ENCODE measurements at regions of chr16 and their contacts with region 1.

Region 1: GRCh38 chr16:81314603-81315270 is at the start of gene GAN:
- DNase-seq: peak; percentile 97
- H3K4me3 ChIP-seq: peak within 1 kb of the TSS; percentile 88
- H3K27ac ChIP-seq: peak within 1 kb of the TSS; percentile 89
- H3K4me1 ChIP-seq: peaks cover 8% of the 10 kb centered on the region
- H3K27me3 ChIP-seq: no peaks in the 10 kb centered on the region
- CTCF ChIP-seq: no peak
- total RNA-seq, gene GAN: 13.6 to 21.5 TPM

Region 2: DNA sequence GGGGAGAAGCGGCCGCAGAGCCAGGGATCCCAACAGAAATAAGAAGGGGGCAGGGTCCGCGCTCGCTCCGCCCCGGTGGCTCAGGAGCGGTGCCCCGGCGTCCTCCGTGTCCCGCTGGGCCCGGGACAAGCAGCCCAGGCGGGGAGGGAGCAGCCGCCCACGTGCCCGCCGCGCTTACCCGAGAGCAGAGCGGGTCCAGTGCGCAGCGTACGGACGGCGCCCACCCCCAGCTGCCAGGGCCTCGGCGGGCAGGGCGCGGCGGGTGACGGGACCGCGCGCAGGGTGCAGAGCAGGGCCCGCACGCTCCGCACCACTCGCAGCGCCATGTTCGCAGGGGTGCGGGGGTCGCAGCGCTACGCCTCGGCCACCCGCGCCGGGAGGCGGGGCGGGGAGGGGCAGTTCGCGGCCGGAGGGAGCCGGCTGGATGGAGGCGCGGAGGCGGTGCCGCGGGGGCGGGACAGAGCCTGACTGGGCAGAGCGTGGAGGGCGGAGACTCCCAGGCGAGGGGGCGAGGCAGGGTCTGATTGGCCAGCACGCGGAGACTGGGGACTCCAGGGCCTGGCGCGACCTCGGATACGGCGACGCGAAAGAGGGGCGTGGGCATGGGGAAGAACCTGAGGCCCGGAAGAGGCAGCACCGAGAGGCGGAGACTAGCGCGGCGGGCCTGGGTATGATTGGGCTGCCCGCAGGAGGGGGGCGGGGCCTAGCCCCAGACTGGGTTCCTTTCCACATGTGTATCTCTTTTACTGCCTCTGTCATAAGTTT is 218.6 kb before region 1 on chr16 and contains the start of gene GCSH:
- intact Hi-C with region 1: loop called (anchors 5 kb)
- DNase-seq: peak; percentile 99
- H3K4me3 ChIP-seq: peak within 1 kb of the TSS; percentile 94
- H3K27ac ChIP-seq: peak within 1 kb of the TSS; percentile 69
- H3K4me1 ChIP-seq: no peaks in the 10 kb centered on the region
- H3K27me3 ChIP-seq: no peaks in the 10 kb centered on the region
- CTCF ChIP-seq: no peak
- total RNA-seq, gene GCSH: 9.4 to 24.7 TPM

Region 3: DNA sequence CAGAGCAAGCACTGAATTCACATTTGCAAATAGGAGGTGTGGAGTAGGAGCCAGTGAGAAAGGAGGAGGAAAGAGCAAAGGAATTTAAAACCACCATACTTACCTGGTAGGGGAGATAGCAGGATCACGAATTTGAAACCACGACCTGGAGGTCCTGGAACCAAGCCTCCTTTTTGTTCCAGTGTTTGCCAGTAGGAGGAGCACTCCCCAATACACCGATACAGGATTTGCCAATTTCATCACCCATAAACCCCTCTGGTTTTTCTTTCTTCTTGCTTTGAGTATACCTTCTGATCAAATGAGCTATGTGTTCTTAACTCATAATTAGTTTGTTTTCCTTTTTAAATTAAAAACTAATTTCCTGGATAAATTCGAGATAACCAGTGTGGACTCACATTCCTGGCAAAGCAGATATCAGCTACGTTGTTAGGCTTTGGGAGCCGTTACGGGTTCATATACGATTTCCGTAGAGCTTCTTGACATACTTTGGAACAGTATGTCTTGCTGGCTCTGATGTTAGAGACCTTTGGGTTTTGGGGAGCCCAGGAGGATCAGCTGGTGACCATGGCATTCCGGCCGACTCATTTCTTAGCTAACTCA is 53.6 kb before region 1 on chr16:
- intact Hi-C with region 1: loop called (anchors 10 kb)
- DNase-seq: no peak
- H3K4me3 ChIP-seq: no peak overlapping the region
- H3K27ac ChIP-seq: no peak overlapping the region
- H3K4me1 ChIP-seq: no peaks in the 10 kb centered on the region
- H3K27me3 ChIP-seq: no peaks in the 10 kb centered on the region
- CTCF ChIP-seq: peak; percentile 56

Region 4: GRCh38 chr16:81349996-81350618 is 35.4 kb after region 1 on chr16:
- intact Hi-C with region 1: no loop called
- DNase-seq: no peak
- H3K4me3 ChIP-seq: no peak overlapping the region
- H3K27ac ChIP-seq: no peak overlapping the region
- H3K4me1 ChIP-seq: no peaks in the 10 kb centered on the region
- H3K27me3 ChIP-seq: no peaks in the 10 kb centered on the region
- CTCF ChIP-seq: no peak

Region 5: GRCh38 chr16:81366316-81366932 is 51.7 kb after region 1 on chr16:
- intact Hi-C with region 1: no loop called
- DNase-seq: no peak
- H3K4me3 ChIP-seq: no peak overlapping the region
- H3K27ac ChIP-seq: no peak overlapping the region
- H3K4me1 ChIP-seq: no peaks in the 10 kb centered on the region
- H3K27me3 ChIP-seq: no peaks in the 10 kb centered on the region
- CTCF ChIP-seq: peak; percentile 60

Measured in colonic mucosa (tissue), 4 donors.